ENCODE measurements at regions of chr3 and their contacts with region 1.

Region 1: DNA sequence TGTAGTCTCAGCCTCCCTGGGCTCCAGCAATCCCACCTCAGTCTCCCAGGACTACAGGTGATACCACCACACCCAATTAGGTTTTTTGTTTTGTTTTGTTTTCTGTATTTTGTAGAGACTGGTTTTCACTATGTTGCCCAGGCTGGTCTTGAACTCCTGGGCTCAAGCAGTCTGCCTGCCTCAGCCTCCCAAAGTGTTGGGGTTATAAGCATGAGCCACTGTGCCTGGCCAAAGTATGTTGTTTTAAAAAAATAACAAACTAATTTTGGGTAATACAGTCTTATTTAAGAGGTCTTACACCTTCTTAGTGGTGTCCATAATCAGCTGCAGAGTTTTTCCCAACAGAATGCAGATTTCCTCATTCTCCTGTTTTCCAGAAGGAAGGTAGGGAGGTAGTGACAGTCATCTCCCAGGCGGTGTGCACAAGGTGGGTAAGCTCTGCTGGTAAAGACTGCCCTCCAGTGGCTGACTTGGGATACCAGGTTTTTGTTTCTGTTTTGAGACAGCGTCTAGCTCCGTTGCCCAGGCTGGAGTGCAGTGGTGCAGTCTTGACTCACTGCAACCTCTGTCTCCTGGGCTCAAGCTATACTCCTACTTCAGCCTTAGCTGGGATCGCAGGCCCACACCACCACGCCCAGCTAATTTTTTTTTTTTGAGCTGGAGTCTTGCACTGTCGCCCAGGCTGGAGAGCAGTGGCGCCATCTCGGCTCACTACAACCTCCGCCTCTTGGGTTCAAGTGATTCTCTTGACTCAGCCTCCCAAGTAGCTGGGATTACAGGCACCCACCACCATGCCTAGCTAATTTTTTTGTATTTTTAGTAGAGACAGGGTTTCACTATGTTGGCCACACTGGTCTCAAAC is 58.4 kb downstream of the MAP6D1 start:
- DNase-seq: peak; percentile 78
- ATAC-seq: peak; percentile 79
- H3K4me3 ChIP-seq: no peak overlapping the region
- H3K4me3 Mint-ChIP-seq: no peak overlapping the region
- H3K27ac ChIP-seq: no peak overlapping the region
- H3K27ac Mint-ChIP-seq: no peak overlapping the region
- H3K4me1 ChIP-seq: peaks cover 9% of the 10 kb centered on the region in 2 donors
- H3K4me1 Mint-ChIP-seq: peaks cover 11% of the 10 kb centered on the region
- H3K27me3 ChIP-seq: no peaks in the 10 kb centered on the region
- H3K27me3 Mint-ChIP-seq: no peaks in the 10 kb centered on the region
- CTCF ChIP-seq: peak; percentile 83

Region 2: GRCh38 chr3:183122257-183122932 is 644.6 kb before region 1 on chr3:
- CTCF ChIA-PET with region 1: interaction called, 10 read pairs
- POLR2A ChIA-PET with region 1: no interaction called
- intact Hi-C with region 1: no loop called
- DNase-seq: peak; percentile 70
- ATAC-seq: peak; percentile 60
- H3K4me3 ChIP-seq: no peak overlapping the region
- H3K4me3 Mint-ChIP-seq: no peak overlapping the region
- H3K27ac ChIP-seq: no peak overlapping the region
- H3K27ac Mint-ChIP-seq: no peak overlapping the region
- H3K4me1 ChIP-seq: no peaks in the 10 kb centered on the region
- H3K4me1 Mint-ChIP-seq: peaks cover under 1% of the 10 kb centered on the region
- H3K27me3 ChIP-seq: peaks cover 0 to 45% (median 33%) of the 10 kb centered on the region in 4 experiments
- H3K27me3 Mint-ChIP-seq: peaks cover 50% of the 10 kb centered on the region
- CTCF ChIP-seq: peak; percentile 97

Region 3: GRCh38 chr3:183188895-183189462 is 578.0 kb before region 1 on chr3:
- CTCF ChIA-PET with region 1: interaction called, 10 read pairs
- POLR2A ChIA-PET with region 1: no interaction called
- intact Hi-C with region 1: no loop called
- DNase-seq: peak; percentile 52
- ATAC-seq: peak; percentile 49
- H3K4me3 ChIP-seq: no peak overlapping the region
- H3K4me3 Mint-ChIP-seq: no peak overlapping the region
- H3K27ac ChIP-seq: no peak overlapping the region
- H3K27ac Mint-ChIP-seq: no peak overlapping the region
- H3K4me1 ChIP-seq: peaks cover 0 to 2% of the 10 kb centered on the region in 2 donors
- H3K4me1 Mint-ChIP-seq: peaks cover 4% of the 10 kb centered on the region
- H3K27me3 ChIP-seq: peaks cover 0 to 51% (median 14%) of the 10 kb centered on the region in 4 experiments
- H3K27me3 Mint-ChIP-seq: peaks cover 57% of the 10 kb centered on the region
- CTCF ChIP-seq: peak; percentile 15

Region 4: GRCh38 chr3:183468424-183468823 is 298.6 kb before region 1 on chr3:
- CTCF ChIA-PET with region 1: interaction called, 75 read pairs
- POLR2A ChIA-PET with region 1: interaction called, 3 read pairs
- intact Hi-C with region 1: loop called (anchors 1 kb)
- DNase-seq: no peak
- ATAC-seq: no peak
- H3K4me3 ChIP-seq: no peak overlapping the region
- H3K4me3 Mint-ChIP-seq: no peak overlapping the region
- H3K27ac ChIP-seq: no peak overlapping the region
- H3K27ac Mint-ChIP-seq: no peak overlapping the region
- H3K4me1 ChIP-seq: peaks cover 0 to 7% of the 10 kb centered on the region in 2 donors
- H3K4me1 Mint-ChIP-seq: peaks cover 10% of the 10 kb centered on the region
- H3K27me3 ChIP-seq: no peaks in the 10 kb centered on the region
- H3K27me3 Mint-ChIP-seq: peaks cover 7% of the 10 kb centered on the region
- CTCF ChIP-seq: no peak

Region 5: GRCh38 chr3:183475016-183475763 is 291.8 kb before region 1 on chr3:
- CTCF ChIA-PET with region 1: interaction called, 75 read pairs
- POLR2A ChIA-PET with region 1: interaction called, 3 read pairs
- intact Hi-C with region 1: no loop called
- DNase-seq: no peak
- ATAC-seq: no peak
- H3K4me3 ChIP-seq: no peak overlapping the region
- H3K4me3 Mint-ChIP-seq: no peak overlapping the region
- H3K27ac ChIP-seq: no peak overlapping the region
- H3K27ac Mint-ChIP-seq: no peak overlapping the region
- H3K4me1 ChIP-seq: peaks cover 0 to 3% of the 10 kb centered on the region in 2 donors
- H3K4me1 Mint-ChIP-seq: peaks cover 1% of the 10 kb centered on the region
- H3K27me3 ChIP-seq: no peaks in the 10 kb centered on the region
- H3K27me3 Mint-ChIP-seq: no peaks in the 10 kb centered on the region
- CTCF ChIP-seq: no peak

Region 6: DNA sequence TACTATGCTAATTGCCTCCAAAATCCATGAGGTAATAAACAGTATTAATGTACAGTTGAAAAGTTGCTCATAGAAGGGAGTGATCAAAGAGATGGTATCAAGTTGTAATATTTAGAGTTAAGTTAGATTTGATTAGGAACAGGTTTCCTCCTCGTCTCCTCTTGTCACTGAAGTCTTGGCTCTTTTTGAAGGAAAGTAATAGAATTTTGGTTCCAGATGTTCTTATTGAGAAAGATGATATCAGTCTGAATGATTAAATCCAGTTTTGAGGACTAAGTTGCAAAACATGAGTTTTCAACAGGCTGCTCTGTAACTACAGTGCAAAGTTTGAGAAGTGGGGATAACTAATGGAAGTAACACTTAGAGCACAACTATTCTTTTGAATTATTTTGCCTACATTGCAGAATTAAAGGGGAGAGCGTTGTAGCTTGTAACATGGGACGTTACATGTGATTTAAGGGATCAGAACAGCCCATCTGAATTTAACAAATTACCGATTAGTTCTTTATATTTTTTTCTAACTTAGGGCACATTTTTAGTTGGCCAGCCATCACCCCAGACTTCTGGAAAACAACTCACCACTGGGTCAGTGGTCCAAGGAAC is 10.1 kb after region 1 on chr3:
- CTCF ChIA-PET with region 1: interaction called, 10 read pairs
- POLR2A ChIA-PET with region 1: no interaction called
- intact Hi-C with region 1: no loop called
- DNase-seq: no peak
- ATAC-seq: no peak
- H3K4me3 ChIP-seq: no peak overlapping the region
- H3K4me3 Mint-ChIP-seq: no peak overlapping the region
- H3K27ac ChIP-seq: no peak overlapping the region
- H3K27ac Mint-ChIP-seq: no peak overlapping the region
- H3K4me1 ChIP-seq: no peaks in the 10 kb centered on the region
- H3K4me1 Mint-ChIP-seq: no peaks in the 10 kb centered on the region
- H3K27me3 ChIP-seq: no peaks in the 10 kb centered on the region
- H3K27me3 Mint-ChIP-seq: no peaks in the 10 kb centered on the region
- CTCF ChIP-seq: no peak

Region 7: DNA sequence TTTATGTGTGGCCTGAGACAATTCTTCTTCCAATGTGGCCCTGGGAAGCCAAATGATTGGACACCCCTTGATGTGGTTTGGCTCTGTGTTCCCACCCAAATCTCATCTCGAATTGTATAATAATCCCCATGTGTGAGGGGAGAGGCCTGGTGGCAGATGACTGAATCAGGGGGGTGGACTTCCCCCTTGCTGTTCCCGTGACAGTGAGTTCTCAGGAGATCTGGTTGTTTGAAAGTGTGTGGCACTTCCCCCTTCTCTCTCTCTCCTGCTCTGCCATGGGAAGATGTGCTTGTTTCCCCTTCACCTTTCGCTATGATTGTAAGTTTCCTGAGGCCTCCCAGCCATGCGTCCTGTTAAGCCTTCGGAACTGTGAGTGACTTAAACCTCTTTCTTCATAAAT is 177.8 kb after region 1 on chr3:
- CTCF ChIA-PET with region 1: no interaction called
- POLR2A ChIA-PET with region 1: no interaction called
- intact Hi-C with region 1: no loop called
- DNase-seq: no peak
- ATAC-seq: no peak
- H3K4me3 ChIP-seq: no peak overlapping the region
- H3K4me3 Mint-ChIP-seq: no peak overlapping the region
- H3K27ac ChIP-seq: no peak overlapping the region
- H3K27ac Mint-ChIP-seq: no peak overlapping the region
- H3K4me1 ChIP-seq: no peaks in the 10 kb centered on the region
- H3K4me1 Mint-ChIP-seq: no peaks in the 10 kb centered on the region
- H3K27me3 ChIP-seq: no peaks in the 10 kb centered on the region
- H3K27me3 Mint-ChIP-seq: no peaks in the 10 kb centered on the region
- CTCF ChIP-seq: no peak

Measured in B cell (primary cell).